WTC11 (cell line): ENCODE measurements at regions of chr1 and their contacts with region 1.

Region 1: DNA sequence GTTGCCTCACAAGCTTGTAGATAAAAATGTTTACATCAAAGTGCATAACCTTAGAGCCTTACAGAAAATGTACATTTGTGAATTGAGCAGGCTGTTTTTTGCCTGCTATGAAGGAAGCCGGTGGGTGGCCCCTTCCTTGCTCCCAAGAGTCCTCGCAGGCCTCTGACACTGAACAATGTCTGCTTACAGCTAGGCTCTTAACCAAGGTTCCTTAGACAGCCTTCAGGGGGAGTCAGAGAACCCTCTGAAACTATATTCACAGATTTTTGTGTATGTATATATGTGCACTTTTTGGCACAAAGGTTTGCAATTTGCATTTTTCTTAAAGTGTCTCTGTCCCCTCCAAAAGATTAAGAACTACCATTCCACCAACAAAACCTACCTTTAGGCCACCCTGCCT is 282.6 kb downstream of the BARHL2 start:
- DNase-seq: peak; percentile 18
- ATAC-seq: peak; percentile 93
- H3K4me3 Mint-ChIP-seq: no peak overlapping the region
- H3K27ac Mint-ChIP-seq: no peak overlapping the region
- H3K4me1 Mint-ChIP-seq: no peaks in the 10 kb centered on the region
- H3K27me3 Mint-ChIP-seq: no peaks in the 10 kb centered on the region
- CTCF ChIP-seq: no peak

Region 2: DNA sequence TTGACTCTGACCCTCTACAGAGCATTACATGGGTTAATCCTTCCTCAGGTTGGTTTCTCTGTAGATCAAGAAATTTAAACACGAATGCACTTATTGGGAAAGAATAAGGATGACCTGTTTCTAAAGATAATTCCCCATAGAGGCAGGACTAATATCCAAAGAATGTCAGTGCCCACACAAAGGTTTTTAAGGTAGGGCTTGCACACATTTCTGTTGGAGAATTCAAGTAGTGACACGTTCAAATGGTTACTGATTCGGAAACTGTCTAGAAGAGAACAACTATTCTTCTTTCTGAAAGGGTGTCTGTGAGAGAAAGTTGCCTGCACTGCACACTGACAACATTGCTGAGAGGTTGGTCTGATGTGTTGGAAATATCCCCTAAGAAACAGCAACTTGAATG is 272.2 kb before region 1 on chr1:
- CTCF ChIA-PET with region 1: no interaction called
- POLR2A ChIA-PET with region 1: interaction called, 13 read pairs
- DNase-seq: no peak
- ATAC-seq: no peak
- H3K4me3 Mint-ChIP-seq: no peak overlapping the region
- H3K27ac Mint-ChIP-seq: no peak overlapping the region
- H3K4me1 Mint-ChIP-seq: no peaks in the 10 kb centered on the region
- H3K27me3 Mint-ChIP-seq: peaks cover 3% of the 10 kb centered on the region; the same call in 1 of the 2 replicates
- CTCF ChIP-seq: no peak

Region 3: GRCh38 chr1:90325168-90325567 is 109.3 kb before region 1 on chr1:
- CTCF ChIA-PET with region 1: no interaction called
- POLR2A ChIA-PET with region 1: no interaction called
- DNase-seq: no peak
- ATAC-seq: no peak
- H3K4me3 Mint-ChIP-seq: no peak overlapping the region
- H3K27ac Mint-ChIP-seq: no peak overlapping the region
- H3K4me1 Mint-ChIP-seq: peaks cover 11% of the 10 kb centered on the region
- H3K27me3 Mint-ChIP-seq: peaks cover 2% of the 10 kb centered on the region; the same call in 1 of the 2 replicates
- CTCF ChIP-seq: no peak

Region 4: GRCh38 chr1:90475631-90476030 is 41.2 kb after region 1 on chr1:
- CTCF ChIA-PET with region 1: interaction called, 10 read pairs
- POLR2A ChIA-PET with region 1: no interaction called
- DNase-seq: no peak
- ATAC-seq: no peak; the same call in 1 of the 2 replicates
- H3K4me3 Mint-ChIP-seq: no peak overlapping the region
- H3K27ac Mint-ChIP-seq: no peak overlapping the region
- H3K4me1 Mint-ChIP-seq: no peaks in the 10 kb centered on the region
- H3K27me3 Mint-ChIP-seq: no peaks in the 10 kb centered on the region
- CTCF ChIP-seq: no peak